ENCODE measurements at regions of chr11 and their contacts with region 1.

Region 1: GRCh38 chr11:31582697-31583096 is 73.1 kb downstream of the ELP4 start:
- DNase-seq: no peak
- H3K4me3 Mint-ChIP-seq: no peak overlapping the region
- H3K27ac Mint-ChIP-seq: no peak overlapping the region
- H3K4me1 Mint-ChIP-seq: no peaks in the 10 kb centered on the region
- H3K27me3 Mint-ChIP-seq: no peaks in the 10 kb centered on the region

Region 2: DNA sequence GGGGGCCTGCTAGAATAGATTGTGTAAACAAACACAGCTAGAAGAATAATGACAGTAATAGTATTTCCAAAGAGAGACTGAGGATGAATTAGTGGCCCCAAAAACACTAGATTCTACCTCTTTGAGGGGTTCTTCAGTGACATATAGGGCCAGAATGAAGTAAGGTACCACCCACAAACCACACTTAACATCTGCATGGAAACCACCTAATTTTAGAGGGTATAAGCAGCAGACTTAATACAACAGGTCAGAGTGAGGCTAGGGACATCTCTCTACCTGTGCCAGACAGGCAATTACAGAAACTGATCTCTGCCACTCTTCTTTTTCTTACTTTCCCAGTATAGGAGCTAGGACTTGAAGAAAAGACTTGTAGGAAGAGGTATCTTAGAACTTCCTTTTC is 53.0 kb before region 1 on chr11:
- intact Hi-C with region 1: no loop called
- DNase-seq: no peak
- H3K4me3 Mint-ChIP-seq: no peak overlapping the region
- H3K27ac Mint-ChIP-seq: no peak overlapping the region
- H3K4me1 Mint-ChIP-seq: no peaks in the 10 kb centered on the region
- H3K27me3 Mint-ChIP-seq: no peaks in the 10 kb centered on the region

Region 3: DNA sequence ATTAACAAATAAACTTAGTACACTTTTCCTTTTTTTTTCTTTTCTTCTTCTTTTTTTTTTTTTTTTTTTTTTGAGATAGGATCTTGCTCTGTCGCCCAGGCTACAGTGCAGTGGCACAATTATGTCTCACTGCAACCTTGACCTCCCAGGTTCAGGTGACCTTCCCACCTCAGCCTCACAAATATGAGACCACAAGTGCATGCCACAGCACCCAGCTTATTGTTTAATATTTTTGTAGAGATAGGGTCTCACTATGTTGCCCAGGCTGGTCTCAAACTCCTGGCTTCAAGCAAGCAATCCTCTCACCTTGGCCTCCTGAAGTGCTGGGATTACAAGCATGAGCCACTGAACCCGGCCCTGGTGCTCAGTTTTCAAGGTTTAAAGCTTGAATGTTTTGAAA is 15.8 kb after region 1 on chr11:
- intact Hi-C with region 1: loop called (anchors 1 kb)
- DNase-seq: no peak
- H3K4me3 Mint-ChIP-seq: no peak overlapping the region
- H3K27ac Mint-ChIP-seq: no peak overlapping the region
- H3K4me1 Mint-ChIP-seq: no peaks in the 10 kb centered on the region
- H3K27me3 Mint-ChIP-seq: no peaks in the 10 kb centered on the region

Measured in activated CD4-positive, alpha-beta T cell treated with anti-CD3 and anti-CD28 coated beads, Interleukin-2, amount 10 ng/mL, durations not matched to agents 24 days and 14 days (primary cell).